Activated CD4-positive, alpha-beta memory T cell treated with anti-CD3 and anti-CD28 coated beads, Interleukin-2, amount 10 ng/mL, durations not matched to agents 7 days and 5 days (primary cell): ENCODE measurements at regions of chr7 and their contacts with region 1.

Region 1: GRCh38 chr7:151631968-151632749 is 112.5 kb upstream of the RHEB start:
- DNase-seq: peak; percentile 89
- H3K4me3 Mint-ChIP-seq: peak overlapping the region; percentile 100
- H3K27ac Mint-ChIP-seq: peak overlapping the region; percentile 100
- H3K4me1 Mint-ChIP-seq: peaks cover 25% of the 10 kb centered on the region
- H3K27me3 Mint-ChIP-seq: no peaks in the 10 kb centered on the region

Region 2: DNA sequence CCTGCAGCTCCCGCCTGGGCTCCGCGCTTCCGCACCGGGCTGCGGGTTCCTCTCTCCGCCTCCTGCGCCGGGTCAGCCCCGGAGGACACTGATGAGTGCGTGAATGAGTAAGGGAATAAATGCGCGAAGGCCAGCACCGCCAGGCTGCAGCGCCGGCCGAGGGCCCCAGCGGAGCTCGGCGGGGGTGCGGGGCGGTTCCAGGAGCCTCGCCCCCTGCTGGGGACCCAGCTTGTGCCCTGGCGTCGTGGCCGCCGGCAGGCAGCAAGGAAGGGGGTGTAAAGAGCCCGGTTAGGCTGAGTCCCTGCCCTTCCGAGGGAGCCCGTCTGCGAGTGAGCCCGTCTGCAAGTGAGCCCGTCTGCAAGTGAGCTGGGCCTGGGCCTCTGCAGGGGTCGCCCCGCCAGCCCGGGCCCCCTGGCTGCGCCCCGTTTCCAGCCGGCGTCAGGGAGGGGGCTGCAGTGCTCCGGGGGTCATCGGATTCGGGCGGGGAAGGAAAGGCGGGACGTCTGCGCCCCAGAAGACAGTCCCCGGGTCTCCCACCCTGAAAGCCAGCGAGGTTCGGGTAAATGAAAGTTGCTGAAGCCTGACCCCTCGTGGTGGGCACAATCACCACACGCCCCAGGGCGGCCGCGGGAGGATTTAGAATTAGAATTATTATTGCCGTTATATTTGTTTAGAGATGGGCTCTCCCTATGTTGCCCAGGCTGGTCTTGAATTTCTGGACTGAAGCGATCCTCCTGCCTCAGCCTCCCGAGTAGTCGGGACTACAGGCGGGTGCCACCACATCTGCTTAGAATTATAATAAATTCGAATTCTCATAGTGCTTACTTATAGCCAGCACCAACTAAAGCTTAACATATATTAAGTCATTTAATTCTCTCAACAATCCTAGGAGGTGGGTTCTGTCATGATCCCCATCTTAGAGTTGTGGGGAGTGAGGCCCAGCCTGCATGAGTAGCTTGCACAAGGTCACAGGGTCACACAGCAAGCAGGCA is 183.6 kb before region 1 on chr7:
- CTCF ChIA-PET with region 1: interaction called, 15 read pairs
- POLR2A ChIA-PET with region 1: interaction called, 3 read pairs
- DNase-seq: peak; percentile 80
- H3K4me3 Mint-ChIP-seq: peak overlapping the region; percentile 66
- H3K27ac Mint-ChIP-seq: no peak overlapping the region
- H3K4me1 Mint-ChIP-seq: peaks cover 11% of the 10 kb centered on the region
- H3K27me3 Mint-ChIP-seq: peaks cover 18% of the 10 kb centered on the region

Region 3: GRCh38 chr7:151612374-151613160 is 19.6 kb before region 1 on chr7:
- CTCF ChIA-PET with region 1: no interaction called
- POLR2A ChIA-PET with region 1: no interaction called
- DNase-seq: no peak
- H3K4me3 Mint-ChIP-seq: no peak overlapping the region
- H3K27ac Mint-ChIP-seq: no peak overlapping the region
- H3K4me1 Mint-ChIP-seq: no peaks in the 10 kb centered on the region
- H3K27me3 Mint-ChIP-seq: no peaks in the 10 kb centered on the region

Region 4: GRCh38 chr7:151642746-151643145 is 10.6 kb after region 1 on chr7:
- CTCF ChIA-PET with region 1: interaction called, 9 read pairs
- POLR2A ChIA-PET with region 1: interaction called, 10 read pairs
- DNase-seq: no peak
- H3K4me3 Mint-ChIP-seq: no peak overlapping the region
- H3K27ac Mint-ChIP-seq: no peak overlapping the region
- H3K4me1 Mint-ChIP-seq: no peaks in the 10 kb centered on the region
- H3K27me3 Mint-ChIP-seq: no peaks in the 10 kb centered on the region

Region 5: GRCh38 chr7:151680721-151681209 is 48.6 kb after region 1 on chr7:
- CTCF ChIA-PET with region 1: no interaction called
- POLR2A ChIA-PET with region 1: no interaction called
- DNase-seq: no peak
- H3K4me3 Mint-ChIP-seq: no peak overlapping the region
- H3K27ac Mint-ChIP-seq: no peak overlapping the region
- H3K4me1 Mint-ChIP-seq: peaks cover 3% of the 10 kb centered on the region
- H3K27me3 Mint-ChIP-seq: no peaks in the 10 kb centered on the region

Region 6: GRCh38 chr7:151782598-151783448 is 150.7 kb after region 1 on chr7:
- CTCF ChIA-PET with region 1: interaction called, 22 read pairs
- POLR2A ChIA-PET with region 1: interaction called, 3 read pairs
- DNase-seq: peak; percentile 67
- H3K4me3 Mint-ChIP-seq: peak overlapping the region; percentile 61
- H3K27ac Mint-ChIP-seq: no peak overlapping the region
- H3K4me1 Mint-ChIP-seq: peaks cover 7% of the 10 kb centered on the region
- H3K27me3 Mint-ChIP-seq: no peaks in the 10 kb centered on the region